ENCODE measurements at regions of chr14 and their contacts with region 1.

Region 1: DNA sequence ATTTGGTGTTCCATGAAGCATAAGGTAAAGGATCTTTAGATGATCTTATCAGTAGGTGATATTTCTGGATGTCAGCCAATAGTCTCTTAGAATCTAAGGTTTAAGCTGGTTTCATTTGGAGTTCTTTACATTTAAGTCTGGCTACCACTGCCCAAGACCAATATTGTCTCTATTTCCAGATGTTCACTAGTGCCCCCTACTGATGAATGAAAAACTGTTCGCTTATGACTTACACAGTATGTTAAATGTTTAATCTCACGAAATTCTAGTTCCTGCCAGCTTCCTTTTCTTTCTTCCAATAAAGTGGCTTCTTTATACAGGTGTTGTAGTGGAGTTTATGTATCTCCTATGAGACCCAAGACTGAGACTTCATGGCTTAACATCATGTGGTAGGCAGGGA is 31.8 kb upstream of the MIS18BP1 start:
- DNase-seq: no peak
- H3K4me3 ChIP-seq: no peak overlapping the region
- H3K27ac ChIP-seq: no peak overlapping the region
- H3K4me1 ChIP-seq: no peaks in the 10 kb centered on the region
- H3K27me3 ChIP-seq: no peaks in the 10 kb centered on the region
- CTCF ChIP-seq: no peak; the same call in 1 of the 2 replicates

Region 2: GRCh38 chr14:44669496-44669895 is 615.3 kb before region 1 on chr14:
- CTCF ChIA-PET with region 1: no interaction called
- POLR2A ChIA-PET with region 1: no interaction called
- intact Hi-C with region 1: no loop called
- DNase-seq: no peak
- H3K4me3 ChIP-seq: no peak overlapping the region
- H3K27ac ChIP-seq: no peak overlapping the region
- H3K4me1 ChIP-seq: no peaks in the 10 kb centered on the region
- H3K27me3 ChIP-seq: no peaks in the 10 kb centered on the region
- CTCF ChIP-seq: no peak

Region 3: DNA sequence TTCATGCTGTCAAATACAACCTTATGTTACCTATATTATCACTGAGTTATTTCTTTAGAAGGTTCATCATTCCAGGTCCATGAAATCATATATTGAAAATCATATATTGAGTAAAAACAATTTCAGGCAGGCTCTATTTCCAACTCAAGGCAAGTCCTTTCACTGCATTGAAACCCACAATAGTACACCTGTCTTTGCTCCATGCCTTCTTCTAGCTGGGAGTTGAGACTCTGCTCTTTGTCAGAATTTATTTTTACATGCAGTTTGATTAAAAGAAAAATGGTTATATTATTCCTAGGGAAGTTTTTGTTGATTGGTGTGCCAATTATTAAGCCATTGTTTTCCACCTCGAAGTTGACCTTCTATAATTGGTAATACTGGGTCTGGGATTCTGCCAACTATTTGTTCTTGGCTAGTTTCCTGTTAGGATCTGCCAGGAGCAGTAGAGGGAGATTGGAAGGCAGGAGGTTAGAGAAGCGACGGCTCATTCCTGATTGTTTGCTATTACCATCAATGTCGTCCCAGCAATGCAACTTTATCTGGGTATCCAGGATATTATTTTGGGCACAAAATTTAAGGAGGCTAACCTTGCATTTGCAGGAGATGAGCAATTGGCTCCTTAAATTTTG is 47.7 kb after region 1 on chr14:
- CTCF ChIA-PET with region 1: interaction called, 10 read pairs
- POLR2A ChIA-PET with region 1: no interaction called
- intact Hi-C with region 1: no loop called
- DNase-seq: no peak
- H3K4me3 ChIP-seq: no peak overlapping the region
- H3K27ac ChIP-seq: no peak overlapping the region
- H3K4me1 ChIP-seq: no peaks in the 10 kb centered on the region
- H3K27me3 ChIP-seq: no peaks in the 10 kb centered on the region
- CTCF ChIP-seq: no peak

Measured in PC-9 (cell line).